Activated CD4-positive, alpha-beta memory T cell treated with anti-CD3 and anti-CD28 coated beads for 36 hours (primary cell): ENCODE measurements at regions of chr1 and their contacts with region 1.

Region 1: GRCh38 chr1:206982216-206982615 is 12.0 kb upstream of the FCAMR start:
- DNase-seq: peak; percentile 72
- H3K4me3 Mint-ChIP-seq: no peak overlapping the region
- H3K27ac Mint-ChIP-seq: no peak overlapping the region
- H3K4me1 Mint-ChIP-seq: no peaks in the 10 kb centered on the region
- H3K27me3 Mint-ChIP-seq: peaks cover 15% of the 10 kb centered on the region

Region 2: GRCh38 chr1:206635080-206635977 is 346.9 kb before region 1 on chr1 and contains the start of gene DYRK3:
- CTCF ChIA-PET with region 1: interaction called, 21 read pairs
- POLR2A ChIA-PET with region 1: interaction called, 3 read pairs
- intact Hi-C with region 1: loop called (anchors 1 kb)
- DNase-seq: peak; percentile 96
- H3K4me3 Mint-ChIP-seq: peak within 1 kb of the TSS; percentile 80
- H3K27ac Mint-ChIP-seq: peak within 1 kb of the TSS; percentile 80
- H3K4me1 Mint-ChIP-seq: peaks cover 25% of the 10 kb centered on the region
- H3K27me3 Mint-ChIP-seq: peaks cover 5% of the 10 kb centered on the region
- total RNA-seq, gene DYRK3: 10.1 to 11.4 TPM

Region 3: GRCh38 chr1:206935491-206936067 is 46.6 kb before region 1 on chr1:
- CTCF ChIA-PET with region 1: interaction called, 58 read pairs
- POLR2A ChIA-PET with region 1: no interaction called
- intact Hi-C with region 1: loop called (anchors 1 kb)
- DNase-seq: peak; percentile 71
- H3K4me3 Mint-ChIP-seq: no peak overlapping the region
- H3K27ac Mint-ChIP-seq: no peak overlapping the region
- H3K4me1 Mint-ChIP-seq: peaks cover 15% of the 10 kb centered on the region
- H3K27me3 Mint-ChIP-seq: no peaks in the 10 kb centered on the region

Region 4: DNA sequence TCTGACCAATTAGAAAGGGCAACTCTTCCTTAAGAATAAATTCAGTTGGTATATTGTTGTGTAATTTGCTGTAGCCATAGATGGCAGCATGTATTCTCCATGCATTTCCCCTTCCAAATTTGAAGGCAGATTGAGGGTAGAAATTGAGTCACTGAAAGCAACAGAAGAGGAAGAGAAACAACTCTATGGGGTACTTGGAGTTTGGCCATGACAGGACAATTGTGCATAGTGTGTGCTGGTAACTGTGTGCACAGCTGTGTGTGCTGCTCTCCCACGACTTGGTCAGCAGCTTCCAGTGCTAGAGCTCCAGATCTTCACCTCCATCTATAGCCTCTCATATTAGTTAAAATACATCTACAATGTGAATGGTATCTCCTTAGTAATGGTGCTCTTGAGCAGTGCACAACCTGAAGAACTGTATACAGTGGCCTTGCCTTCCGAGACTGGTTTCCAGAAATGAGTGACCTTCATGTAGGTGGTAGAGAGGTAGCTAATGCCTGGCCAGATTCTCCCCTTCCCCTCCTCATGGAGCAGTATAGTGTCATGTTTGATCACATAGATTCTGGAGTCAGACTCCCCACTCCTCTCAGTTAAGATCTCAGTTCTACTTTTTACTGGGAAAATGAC is 11.1 kb before region 1 on chr1:
- CTCF ChIA-PET with region 1: interaction called, 25 read pairs
- POLR2A ChIA-PET with region 1: no interaction called
- intact Hi-C with region 1: no loop called
- DNase-seq: no peak
- H3K4me3 Mint-ChIP-seq: no peak overlapping the region
- H3K27ac Mint-ChIP-seq: no peak overlapping the region
- H3K4me1 Mint-ChIP-seq: peaks cover 19% of the 10 kb centered on the region
- H3K27me3 Mint-ChIP-seq: peaks cover 9% of the 10 kb centered on the region

Region 5: DNA sequence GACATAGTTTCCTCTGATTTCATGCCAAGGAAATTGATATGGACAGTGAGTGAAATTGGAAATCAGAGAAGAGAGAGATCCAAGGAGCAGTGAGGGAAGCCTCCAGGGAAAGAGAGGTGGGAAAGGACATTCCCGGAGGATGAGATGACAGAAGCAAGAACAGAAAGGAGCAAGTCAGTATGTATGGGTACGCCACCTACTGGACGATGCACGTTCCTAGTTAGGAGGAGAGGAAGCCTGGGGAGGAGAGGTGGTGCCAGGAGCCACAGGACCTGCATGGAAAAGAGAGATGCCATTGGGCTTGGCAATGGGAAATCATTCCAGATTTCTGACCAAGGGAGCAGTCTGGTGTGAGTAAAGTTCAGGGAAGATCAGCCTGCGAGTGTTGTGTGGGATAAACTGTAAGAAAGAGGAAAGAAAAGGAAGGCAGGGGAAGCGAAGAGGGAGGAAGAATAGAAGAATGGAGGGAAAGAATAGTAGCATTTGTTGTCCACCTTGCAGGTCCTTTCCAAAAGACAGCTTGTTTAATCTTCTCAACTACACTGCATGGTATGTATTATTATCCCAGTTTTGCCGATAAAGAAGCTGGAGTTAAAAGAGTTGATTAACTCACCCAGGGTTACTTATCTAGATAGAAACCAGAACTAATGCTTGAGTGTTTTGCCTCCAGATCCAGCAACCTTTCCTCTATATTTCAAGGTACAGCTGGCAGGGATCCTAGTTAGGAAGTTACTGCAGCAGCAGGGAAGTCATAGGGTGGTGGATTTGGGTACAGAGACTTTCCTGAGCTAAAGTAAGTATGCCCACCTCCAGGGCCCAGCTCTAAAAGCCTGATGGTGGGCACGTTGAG is 23.0 kb after region 1 on chr1:
- CTCF ChIA-PET with region 1: interaction called, 16 read pairs
- POLR2A ChIA-PET with region 1: no interaction called
- intact Hi-C with region 1: no loop called
- DNase-seq: peak; percentile 51
- H3K4me3 Mint-ChIP-seq: no peak overlapping the region
- H3K27ac Mint-ChIP-seq: no peak overlapping the region
- H3K4me1 Mint-ChIP-seq: peaks cover 2% of the 10 kb centered on the region
- H3K27me3 Mint-ChIP-seq: peaks cover 7% of the 10 kb centered on the region